GM12878 (cell line): ENCODE measurements at regions of chr10 and their contacts with region 1.

Region 1: GRCh38 chr10:112375721-112376395 is 1.9 kb downstream of the ACSL5 start:
- DNase-seq: peak; percentile 48
- ATAC-seq: peak; percentile 87
- H3K4me3 ChIP-seq: peak overlapping the region; percentile 99
- H3K27ac ChIP-seq: peak overlapping the region; percentile 95
- H3K4me1 ChIP-seq: peaks cover 9% of the 10 kb centered on the region
- H3K27me3 ChIP-seq: no peaks in the 10 kb centered on the region
- CTCF ChIP-seq: no peak
- EP300 ChIP-seq: no peak
- POLR2A ChIP-seq: peak; percentile 90
- RAD21 ChIP-seq: no peak

Region 2: DNA sequence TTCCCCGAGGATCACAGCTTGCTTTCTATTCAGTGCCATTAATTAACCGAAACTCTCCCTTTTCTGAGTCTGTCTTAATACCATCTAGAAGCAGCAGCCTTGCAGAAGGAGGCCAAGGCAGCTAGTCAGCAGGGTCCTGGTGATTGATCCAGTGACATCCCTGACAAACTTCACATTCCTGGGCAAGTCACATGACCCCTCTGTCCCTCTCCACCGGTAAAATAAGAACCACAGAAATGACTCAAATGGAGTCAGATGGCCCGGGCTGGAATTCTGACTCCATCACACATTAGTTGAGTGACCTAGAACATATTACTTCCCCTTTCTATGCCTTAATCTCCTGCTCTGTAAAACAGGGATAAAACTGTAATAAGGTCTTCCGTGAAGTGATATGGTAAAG is 19.2 kb before region 1 on chr10:
- CTCF ChIA-PET with region 1: no interaction called
- POLR2A ChIA-PET with region 1: no interaction called
- RAD21 ChIA-PET with region 1: no interaction called
- SMC1A ChIA-PET with region 1: no interaction called
- in situ Hi-C with region 1: no loop called
- intact Hi-C with region 1: no loop called
- DNase-seq: no peak
- ATAC-seq: no peak
- H3K4me3 ChIP-seq: no peak overlapping the region
- H3K27ac ChIP-seq: no peak overlapping the region
- H3K4me1 ChIP-seq: no peaks in the 10 kb centered on the region
- H3K27me3 ChIP-seq: no peaks in the 10 kb centered on the region
- CTCF ChIP-seq: no peak
- EP300 ChIP-seq: no peak
- POLR2A ChIP-seq: no peak
- RAD21 ChIP-seq: no peak

Region 3: DNA sequence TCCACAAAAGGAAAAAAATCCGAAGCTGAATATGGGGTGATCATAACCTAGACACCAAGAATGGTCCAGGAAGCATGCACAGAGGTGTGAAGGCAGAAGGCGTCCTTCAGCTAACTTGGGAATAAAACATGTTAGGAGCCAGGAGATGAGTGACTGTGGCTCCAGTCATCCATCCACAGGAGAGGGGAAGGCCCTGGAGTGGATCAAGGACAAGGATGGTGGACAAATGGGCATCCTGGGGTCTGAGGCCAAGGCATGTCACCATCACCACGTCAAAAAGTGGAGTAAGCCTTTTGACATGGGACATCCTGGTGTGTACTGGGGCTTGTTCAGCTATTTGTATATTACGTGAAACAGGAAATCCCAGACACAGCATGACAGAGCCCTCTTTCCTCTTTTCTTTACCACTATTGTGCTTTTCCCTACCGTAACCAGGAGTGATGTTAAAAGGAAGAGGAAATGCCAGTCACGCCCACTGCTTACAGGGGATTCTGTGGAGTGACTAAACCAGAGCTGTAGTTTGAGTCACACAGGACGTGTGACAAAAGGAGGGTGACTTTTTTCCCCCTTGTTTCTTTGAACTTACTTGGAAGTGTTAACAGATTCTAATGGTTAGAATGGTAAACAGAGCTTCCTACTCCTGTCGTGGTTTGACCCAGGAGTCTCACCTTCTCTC is 13.4 kb after region 1 on chr10:
- CTCF ChIA-PET with region 1: interaction called, 36 read pairs
- POLR2A ChIA-PET with region 1: interaction called, 17 read pairs
- RAD21 ChIA-PET with region 1: interaction called, 5 read pairs
- SMC1A ChIA-PET with region 1: interaction called, 24 read pairs
- in situ Hi-C with region 1: no loop called
- intact Hi-C with region 1: no loop called
- DNase-seq: peak; percentile 59
- ATAC-seq: peak; percentile 84
- H3K4me3 ChIP-seq: no peak overlapping the region
- H3K27ac ChIP-seq: peak overlapping the region; percentile 38
- H3K4me1 ChIP-seq: peaks cover 9% of the 10 kb centered on the region
- H3K27me3 ChIP-seq: no peaks in the 10 kb centered on the region
- CTCF ChIP-seq: no peak
- EP300 ChIP-seq: no peak
- POLR2A ChIP-seq: no peak
- RAD21 ChIP-seq: no peak

Region 4: DNA sequence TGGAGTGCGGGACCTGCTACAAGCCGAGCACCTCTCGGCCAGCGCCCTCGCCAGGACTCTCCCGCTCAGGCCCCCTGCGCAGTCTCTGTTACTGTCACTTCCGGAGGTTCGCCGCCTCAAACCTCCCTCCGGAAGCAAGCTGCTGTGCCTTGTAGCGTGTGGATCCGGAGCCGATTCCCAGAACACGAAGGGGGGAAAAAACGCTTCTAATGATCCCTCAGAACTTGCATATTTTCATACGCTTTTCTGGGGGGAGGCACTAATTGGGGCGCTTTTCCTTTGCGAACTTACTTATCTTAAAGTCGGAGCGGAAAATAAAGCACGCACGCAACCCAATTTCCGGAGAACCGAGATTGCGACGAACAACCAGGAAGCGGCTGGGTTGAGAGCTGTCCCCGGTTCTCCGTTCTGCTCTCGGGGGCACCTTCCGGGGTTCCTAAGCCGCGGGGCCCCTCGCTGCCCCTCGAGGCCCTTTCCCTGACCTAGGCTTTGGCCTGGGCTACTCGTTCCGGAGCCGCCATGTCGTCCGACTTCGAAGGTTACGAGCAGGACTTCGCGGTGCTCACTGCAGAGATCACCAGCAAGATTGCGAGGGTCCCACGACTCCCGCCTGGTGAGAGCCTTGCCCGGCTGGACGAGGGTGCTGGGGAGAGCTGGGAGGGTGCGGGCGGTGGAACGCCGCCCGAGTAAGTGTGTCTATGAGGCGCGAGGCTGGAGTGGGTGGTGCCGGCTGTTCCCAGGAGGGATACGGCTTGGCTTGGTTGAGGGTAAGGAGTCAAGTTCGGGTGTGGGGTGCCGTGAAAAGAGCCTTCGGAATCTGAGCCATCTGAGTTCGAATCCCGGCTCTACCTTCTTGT is 71.2 kb after region 1 on chr10 and contains the starts of genes VTI1A and ZDHHC6:
- CTCF ChIA-PET with region 1: interaction called, 9 read pairs
- POLR2A ChIA-PET with region 1: interaction called, 4 read pairs
- RAD21 ChIA-PET with region 1: interaction called, 3 read pairs
- SMC1A ChIA-PET with region 1: interaction called, 7 read pairs
- in situ Hi-C with region 1: no loop called
- intact Hi-C with region 1: loop called (anchors 5 kb)
- DNase-seq: peak; percentile 37
- ATAC-seq: peak; percentile 91
- H3K4me3 ChIP-seq: peak within 1 kb of the TSS; percentile 93
- H3K27ac ChIP-seq: peak within 1 kb of the TSS; percentile 97
- H3K4me1 ChIP-seq: peaks cover 8% of the 10 kb centered on the region
- H3K27me3 ChIP-seq: no peaks in the 10 kb centered on the region
- CTCF ChIP-seq: peak; percentile 24 to 32 (median 31); a peak in 3 of 6 replicates
- EP300 ChIP-seq: no peak
- POLR2A ChIP-seq: peak; percentile 96
- RAD21 ChIP-seq: no peak
- polyA plus RNA-seq, gene VTI1A: 12.4 to 12.5 TPM
- polyA plus RNA-seq, gene ZDHHC6: 29.5 to 31.8 TPM

Region 5: GRCh38 chr10:112631501-112632410 is 255.9 kb after region 1 on chr10:
- CTCF ChIA-PET with region 1: no interaction called
- POLR2A ChIA-PET with region 1: no interaction called
- RAD21 ChIA-PET with region 1: no interaction called
- SMC1A ChIA-PET with region 1: no interaction called
- in situ Hi-C with region 1: no loop called
- intact Hi-C with region 1: no loop called
- DNase-seq: no peak
- ATAC-seq: no peak
- H3K4me3 ChIP-seq: no peak overlapping the region
- H3K27ac ChIP-seq: no peak overlapping the region
- H3K4me1 ChIP-seq: no peaks in the 10 kb centered on the region
- H3K27me3 ChIP-seq: no peaks in the 10 kb centered on the region
- CTCF ChIP-seq: no peak
- EP300 ChIP-seq: no peak
- POLR2A ChIP-seq: no peak
- RAD21 ChIP-seq: no peak

Region 6: GRCh38 chr10:112803961-112804401 is 428.1 kb after region 1 on chr10:
- CTCF ChIA-PET with region 1: no interaction called
- POLR2A ChIA-PET with region 1: no interaction called
- RAD21 ChIA-PET with region 1: no interaction called
- SMC1A ChIA-PET with region 1: no interaction called
- in situ Hi-C with region 1: no loop called
- intact Hi-C with region 1: no loop called
- DNase-seq: no peak
- ATAC-seq: no peak
- H3K4me3 ChIP-seq: no peak overlapping the region
- H3K27ac ChIP-seq: no peak overlapping the region
- H3K4me1 ChIP-seq: no peaks in the 10 kb centered on the region
- H3K27me3 ChIP-seq: no peaks in the 10 kb centered on the region
- CTCF ChIP-seq: no peak
- EP300 ChIP-seq: no peak
- POLR2A ChIP-seq: no peak
- RAD21 ChIP-seq: no peak